ENCODE measurements at regions of chr2 and their contacts with region 1.

Region 1: GRCh38 chr2:18626256-18626668 is 36.9 kb upstream of the NT5C1B start:
- DNase-seq: no peak
- H3K4me3 ChIP-seq: no peak overlapping the region
- H3K27ac ChIP-seq: no peak overlapping the region
- H3K4me1 ChIP-seq: no peaks in the 10 kb centered on the region
- H3K27me3 ChIP-seq: no peaks in the 10 kb centered on the region
- CTCF ChIP-seq: no peak
- POLR2A ChIP-seq: no peak

Region 2: GRCh38 chr2:18584608-18584954 is 41.7 kb before region 1 on chr2:
- intact Hi-C with region 1: no loop called
- DNase-seq: no peak
- H3K4me3 ChIP-seq: no peak overlapping the region
- H3K27ac ChIP-seq: no peak overlapping the region
- H3K4me1 ChIP-seq: no peaks in the 10 kb centered on the region
- H3K27me3 ChIP-seq: no peaks in the 10 kb centered on the region
- CTCF ChIP-seq: no peak
- POLR2A ChIP-seq: no peak

Region 3: DNA sequence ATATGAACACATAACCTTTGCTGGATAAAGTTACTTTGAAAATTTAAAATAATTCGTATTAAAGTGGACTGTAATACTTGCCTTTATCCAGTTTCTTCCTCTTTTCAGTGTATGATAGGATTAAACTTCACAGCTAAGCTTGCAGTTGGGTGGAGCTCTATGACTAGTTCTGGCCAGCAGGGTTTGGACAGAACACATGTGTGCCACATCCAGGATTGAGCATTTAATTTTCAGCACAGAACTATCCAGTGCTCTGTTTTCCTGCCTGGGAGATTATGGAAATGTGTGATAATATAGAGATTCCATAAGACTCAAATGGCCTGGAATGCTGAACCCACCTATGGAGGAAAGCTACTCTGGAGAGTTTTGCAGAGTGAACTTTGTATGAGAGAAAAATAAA is 531.9 kb after region 1 on chr2:
- intact Hi-C with region 1: loop called (anchors 5 kb)
- DNase-seq: no peak
- H3K4me3 ChIP-seq: no peak overlapping the region
- H3K27ac ChIP-seq: no peak overlapping the region
- H3K4me1 ChIP-seq: no peaks in the 10 kb centered on the region
- H3K27me3 ChIP-seq: no peaks in the 10 kb centered on the region
- CTCF ChIP-seq: no peak
- POLR2A ChIP-seq: no peak